ENCODE measurements at regions of chr4 and their contacts with region 1.

Region 1: DNA sequence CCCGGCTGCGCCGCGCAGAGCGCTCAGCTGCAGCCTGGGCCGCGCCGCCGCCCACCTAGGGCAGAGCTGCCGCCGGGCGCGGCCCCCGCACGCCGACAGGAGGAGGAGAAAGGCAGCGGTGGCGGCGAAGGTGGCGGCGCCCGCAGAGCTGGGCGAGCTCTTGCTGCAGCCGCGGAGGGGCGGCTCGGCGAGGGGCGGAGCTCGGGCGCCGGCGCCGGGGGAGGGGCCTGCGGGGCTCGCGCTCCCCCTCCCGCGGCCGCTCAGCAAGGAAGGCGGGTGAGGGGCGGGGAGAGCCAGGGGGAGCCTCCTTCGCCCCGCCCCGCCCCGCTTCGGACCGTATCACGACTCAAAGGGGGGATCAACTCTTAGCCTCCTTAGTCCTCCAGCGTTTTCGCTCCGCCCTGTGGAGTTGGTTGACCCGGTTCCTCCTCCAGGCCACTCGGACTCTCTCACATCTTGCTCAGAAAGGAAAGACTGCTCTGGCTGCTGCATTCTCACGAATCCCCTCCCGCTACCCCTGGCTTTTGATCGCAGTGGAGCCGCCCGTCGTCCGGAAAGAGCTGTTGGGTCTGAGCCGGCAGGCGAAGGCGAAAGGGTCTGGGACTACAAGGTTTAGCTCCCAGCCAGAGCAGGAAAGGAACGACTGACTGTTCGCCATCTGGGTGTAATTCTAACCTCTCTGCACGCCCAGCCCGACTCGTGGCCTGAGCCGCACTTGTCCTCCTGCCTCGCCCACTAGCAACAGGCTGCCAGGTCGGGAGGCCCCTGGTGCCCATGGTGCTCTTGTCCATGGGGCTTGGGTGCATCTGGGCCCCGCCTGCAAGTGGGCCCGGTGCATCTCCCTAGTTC is at the start of gene ATP8A1:
- DNase-seq: peak; percentile 94 to 97
- ATAC-seq: peak; percentile 91 to 98 (median 92)
- H3K4me3 ChIP-seq: peak within 1 kb of the TSS; percentile 97
- H3K4me3 Mint-ChIP-seq: peak within 1 kb of the TSS; percentile 90
- H3K27ac ChIP-seq: peak within 1 kb of the TSS; percentile 90
- H3K27ac Mint-ChIP-seq: peak within 1 kb of the TSS; percentile 74 to 95
- H3K4me1 ChIP-seq: peaks cover 25% of the 10 kb centered on the region
- H3K4me1 Mint-ChIP-seq: peaks cover 51 to 62% of the 10 kb centered on the region in 2 donors
- H3K27me3 ChIP-seq: no peaks in the 10 kb centered on the region
- H3K27me3 Mint-ChIP-seq: no peaks in the 10 kb centered on the region
- CTCF ChIP-seq: no peak
- total RNA-seq, gene ATP8A1: 84.8 to 156 (median 147) TPM

Region 2: GRCh38 chr4:42607011-42607726 is 50.0 kb before region 1 on chr4:
- intact Hi-C with region 1: no loop called
- DNase-seq: no peak
- ATAC-seq: no peak
- H3K4me3 ChIP-seq: no peak overlapping the region
- H3K4me3 Mint-ChIP-seq: no peak overlapping the region
- H3K27ac ChIP-seq: no peak overlapping the region
- H3K27ac Mint-ChIP-seq: no peak overlapping the region
- H3K4me1 ChIP-seq: no peaks in the 10 kb centered on the region
- H3K4me1 Mint-ChIP-seq: peaks cover 21 to 28% of the 10 kb centered on the region in 2 donors
- H3K27me3 ChIP-seq: no peaks in the 10 kb centered on the region
- H3K27me3 Mint-ChIP-seq: no peaks in the 10 kb centered on the region
- CTCF ChIP-seq: no peak

Region 3: DNA sequence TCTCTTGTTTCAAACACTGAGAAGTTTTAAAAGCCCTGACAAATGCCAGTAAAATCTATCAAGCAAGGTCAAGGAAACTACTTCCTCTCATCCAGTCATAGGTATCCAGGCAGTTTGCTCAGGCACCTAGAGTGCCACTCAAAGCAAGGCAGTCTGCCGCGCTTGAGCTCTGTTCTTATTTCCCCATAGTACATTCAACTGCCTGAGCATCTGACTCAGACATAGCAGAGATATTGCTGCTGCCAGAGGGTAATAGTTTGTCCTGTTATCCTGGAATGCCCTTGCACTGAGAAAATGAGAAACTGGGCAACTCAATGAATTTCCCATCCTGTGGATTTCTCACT is 15.9 kb after region 1 on chr4:
- intact Hi-C with region 1: loop called (anchors 2 kb)
- DNase-seq: peak in 1 of 2 donors; percentile 48
- ATAC-seq: no peak
- H3K4me3 ChIP-seq: no peak overlapping the region
- H3K4me3 Mint-ChIP-seq: peak overlapping the region; percentile 79
- H3K27ac ChIP-seq: peak overlapping the region; percentile 74
- H3K27ac Mint-ChIP-seq: peak overlapping the region; percentile 85 to 94
- H3K4me1 ChIP-seq: peaks cover 12% of the 10 kb centered on the region
- H3K4me1 Mint-ChIP-seq: peaks cover 37 to 43% of the 10 kb centered on the region in 2 donors
- H3K27me3 ChIP-seq: no peaks in the 10 kb centered on the region
- H3K27me3 Mint-ChIP-seq: no peaks in the 10 kb centered on the region
- CTCF ChIP-seq: no peak

Measured in natural killer cell (primary cell).